ENCODE measurements at regions of chr17 and their contacts with region 1.

Region 1: DNA sequence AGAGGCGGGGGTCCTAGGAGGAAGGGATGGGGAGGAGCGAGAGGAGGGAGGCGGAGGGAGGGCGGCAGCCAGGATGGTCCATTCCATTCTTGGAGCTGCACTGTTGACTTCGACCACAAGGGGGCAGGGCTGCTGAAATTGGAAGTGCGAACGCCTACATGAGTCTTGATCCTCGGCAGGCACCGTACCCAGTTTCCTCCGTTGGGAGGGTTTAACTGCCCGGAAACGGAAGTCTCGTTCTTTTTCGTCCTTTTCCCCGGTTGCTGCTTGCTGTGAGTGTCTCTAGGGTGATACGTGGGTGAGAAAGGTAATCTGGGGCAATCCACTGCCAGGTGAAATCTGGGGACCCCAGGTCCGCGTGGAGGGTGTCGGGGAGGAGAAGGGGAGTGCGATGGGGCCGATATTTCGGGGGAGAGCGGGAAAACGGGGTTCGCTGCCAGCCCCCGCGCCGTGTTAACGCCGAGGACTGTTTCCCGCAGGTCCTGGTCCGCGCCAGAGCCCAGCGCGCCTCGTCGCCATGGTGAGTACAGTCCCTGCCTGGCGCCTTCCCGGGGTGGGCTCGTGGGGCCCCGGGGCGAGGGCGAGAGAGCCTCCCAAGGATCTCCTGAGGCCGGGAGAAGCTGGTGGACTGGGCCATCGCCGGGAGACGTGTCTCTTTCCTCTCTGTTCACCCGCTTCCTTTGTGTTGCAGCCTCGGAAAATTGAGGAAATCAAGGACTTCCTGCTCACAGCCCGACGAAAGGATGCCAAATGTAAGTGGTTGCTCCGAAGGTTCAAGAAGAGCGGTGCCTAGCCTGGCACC is at the start of gene RPL38:
- DNase-seq: peak; percentile 82
- H3K4me3 ChIP-seq: peak within 1 kb of the TSS; percentile 89
- H3K27me3 ChIP-seq: peaks cover 10% of the 10 kb centered on the region
- CTCF ChIP-seq: peak; percentile 99
- polyA plus RNA-seq, gene RPL38: 1,841 and 2,079 TPM in 2 replicates

Region 2: GRCh38 chr17:74182041-74182723 is 21.5 kb before region 1 on chr17:
- CTCF ChIA-PET with region 1: interaction called, 75 read pairs
- POLR2A ChIA-PET with region 1: no interaction called
- DNase-seq: no peak
- H3K4me3 ChIP-seq: no peak overlapping the region
- H3K27me3 ChIP-seq: no peaks in the 10 kb centered on the region; the same call in 1 of the 2 replicates
- CTCF ChIP-seq: no peak

Region 3: GRCh38 chr17:74190172-74190571 is 13.5 kb before region 1 on chr17:
- CTCF ChIA-PET with region 1: interaction called, 75 read pairs
- POLR2A ChIA-PET with region 1: interaction called, 3 read pairs
- DNase-seq: no peak
- H3K4me3 ChIP-seq: no peak overlapping the region
- H3K27me3 ChIP-seq: peaks cover 6% of the 10 kb centered on the region
- CTCF ChIP-seq: no peak

Region 4: GRCh38 chr17:74305865-74306654 is 102.4 kb after region 1 on chr17:
- CTCF ChIA-PET with region 1: no interaction called
- POLR2A ChIA-PET with region 1: no interaction called
- DNase-seq: no peak
- H3K4me3 ChIP-seq: no peak overlapping the region
- H3K27me3 ChIP-seq: no peaks in the 10 kb centered on the region
- CTCF ChIP-seq: no peak

Measured in BJ (cell line).